ENCODE measurements at regions of chr5 and their contacts with region 1.

Region 1: DNA sequence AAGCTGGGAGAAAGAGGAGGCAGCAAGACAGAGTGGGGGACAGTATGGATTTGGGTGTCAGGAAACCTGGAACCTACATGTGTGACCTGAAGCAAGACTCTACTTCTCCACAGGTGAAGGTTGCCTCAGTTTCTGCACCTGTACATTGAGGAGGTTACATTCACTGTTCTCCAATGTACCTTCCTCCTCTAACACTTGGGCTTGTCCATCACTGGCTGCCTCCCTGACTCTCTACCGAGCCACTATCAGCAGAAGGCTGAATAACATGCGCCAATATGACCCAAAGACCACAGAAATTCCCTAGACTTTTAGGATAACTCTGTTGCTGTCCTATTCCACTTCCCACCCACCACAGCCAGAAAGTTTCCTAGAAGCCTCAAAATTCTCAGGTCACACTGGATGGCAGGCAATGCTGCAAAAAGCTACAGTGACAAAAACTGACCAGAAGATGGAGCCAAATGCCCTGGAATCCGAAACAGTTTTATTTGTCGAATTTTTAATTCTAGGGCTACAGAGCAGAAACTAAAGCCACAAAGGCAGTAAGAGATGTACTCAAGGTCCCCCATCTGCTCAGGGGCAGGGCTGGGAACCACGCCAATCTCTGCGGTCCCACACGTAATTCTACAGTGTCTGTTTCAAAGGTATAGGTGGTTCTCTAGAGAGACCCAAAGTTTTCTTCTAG is 64.4 kb downstream of the FAM114A2 start:
- DNase-seq: no peak
- ATAC-seq: peak; percentile 17

Region 2: GRCh38 chr5:153719324-153719723 is 254.9 kb before region 1 on chr5:
- intact Hi-C with region 1: no loop called
- DNase-seq: peak; percentile 60
- ATAC-seq: no peak

Region 3: DNA sequence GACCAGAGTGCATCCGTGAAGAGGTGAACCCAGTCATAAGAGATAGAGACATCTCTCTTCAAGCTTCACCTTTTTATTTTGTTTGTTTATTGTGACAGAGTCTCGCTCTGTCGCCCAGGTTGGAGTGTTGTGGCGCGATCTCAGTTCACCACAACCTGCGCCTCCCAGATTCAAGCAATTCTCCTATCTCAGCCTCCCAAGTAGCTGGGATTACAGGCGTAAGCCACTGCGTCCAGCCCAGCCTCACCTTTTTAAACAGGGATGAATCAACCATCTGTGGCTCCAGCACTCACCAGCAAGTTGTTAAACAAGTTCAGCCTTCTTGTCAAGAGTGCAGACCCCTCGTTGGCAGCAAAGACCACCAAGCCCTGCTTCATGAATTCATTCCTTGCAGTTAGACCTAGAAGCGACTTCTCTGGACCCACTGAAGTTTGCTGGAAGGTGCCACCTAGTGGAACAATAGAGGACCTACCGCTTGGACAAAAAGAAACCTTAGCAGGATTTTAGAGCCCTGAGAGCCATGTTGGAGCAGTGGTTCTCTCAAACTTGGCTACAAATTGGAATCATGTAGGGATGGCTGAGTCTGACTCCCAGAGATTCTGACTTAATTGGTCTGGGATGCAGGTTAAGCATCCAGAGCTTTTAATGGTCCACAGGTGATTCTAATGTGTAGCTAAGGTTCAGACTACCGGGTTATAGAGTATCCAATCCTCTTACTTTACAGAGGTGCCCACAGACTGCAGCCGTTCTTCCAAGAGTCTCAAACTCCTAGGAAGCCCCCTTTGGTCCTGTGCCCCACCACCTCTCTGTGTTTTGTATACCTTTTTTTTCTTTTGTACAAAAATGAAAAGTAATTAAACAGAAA is 205.8 kb after region 1 on chr5:
- intact Hi-C with region 1: loop called (anchors 5 kb)
- DNase-seq: no peak
- ATAC-seq: peak; percentile 82

Region 4: DNA sequence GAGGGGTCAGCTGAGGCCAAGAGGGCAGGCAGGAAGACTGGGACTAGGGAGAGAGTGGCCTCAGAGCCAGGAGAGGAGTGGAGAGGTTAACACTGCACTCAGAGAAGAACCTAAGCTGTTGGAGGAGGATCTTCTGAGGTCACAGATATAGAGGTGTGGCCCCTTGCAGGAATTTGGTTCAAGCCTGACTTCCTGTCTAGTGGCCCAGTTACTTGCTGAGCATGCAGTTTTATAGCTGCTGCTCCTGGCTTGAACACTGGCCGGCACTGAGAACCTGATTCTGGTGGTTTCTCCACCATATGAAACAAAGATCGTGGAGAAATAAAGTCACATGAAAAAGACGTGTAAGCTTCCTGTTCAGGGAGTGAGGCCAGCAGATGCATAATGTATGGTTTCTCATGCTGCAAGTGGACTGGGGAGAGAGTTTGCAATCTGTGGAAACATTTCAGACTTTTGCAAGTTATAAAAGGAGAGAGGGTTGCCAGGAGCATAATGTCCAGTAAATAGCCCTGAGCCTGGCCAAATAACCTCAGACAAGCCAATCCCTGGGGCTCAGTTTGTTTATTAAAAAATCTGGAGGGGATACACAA is 298.9 kb after region 1 on chr5:
- intact Hi-C with region 1: no loop called
- DNase-seq: no peak
- ATAC-seq: peak; percentile 75

Region 5: GRCh38 chr5:154603978-154604679 is 629.9 kb after region 1 on chr5:
- intact Hi-C with region 1: loop called (anchors 10 kb)
- DNase-seq: no peak
- ATAC-seq: peak; percentile 71